PC-9 (cell line): ENCODE measurements at regions of chr2 and their contacts with region 1.

Region 1: DNA sequence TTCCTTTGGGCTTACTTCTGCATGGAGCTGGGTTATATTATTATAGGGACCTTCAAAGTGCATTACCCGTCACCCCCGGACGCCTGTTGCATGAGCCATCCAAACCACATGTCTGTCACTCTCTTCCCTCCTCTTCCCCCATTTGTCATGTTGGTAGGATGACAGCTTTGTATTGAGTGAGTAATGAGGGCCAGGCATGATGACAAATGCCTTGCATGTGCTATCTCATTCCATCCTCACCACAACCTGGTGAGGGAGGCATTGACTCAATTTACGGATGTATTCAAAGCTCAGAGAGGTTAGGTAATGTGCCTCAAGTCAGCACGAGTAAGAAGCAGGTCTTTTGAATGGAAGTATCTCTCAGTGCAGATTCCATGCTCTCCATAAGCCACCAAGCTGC is 510.5 kb upstream of the TNP1 start:
- DNase-seq: peak; percentile 32 to 79
- H3K4me3 ChIP-seq: no peak overlapping the region
- H3K27ac ChIP-seq: no peak overlapping the region
- H3K4me1 ChIP-seq: peaks cover 53% of the 10 kb centered on the region
- H3K27me3 ChIP-seq: no peaks in the 10 kb centered on the region
- CTCF ChIP-seq: no peak

Region 2: DNA sequence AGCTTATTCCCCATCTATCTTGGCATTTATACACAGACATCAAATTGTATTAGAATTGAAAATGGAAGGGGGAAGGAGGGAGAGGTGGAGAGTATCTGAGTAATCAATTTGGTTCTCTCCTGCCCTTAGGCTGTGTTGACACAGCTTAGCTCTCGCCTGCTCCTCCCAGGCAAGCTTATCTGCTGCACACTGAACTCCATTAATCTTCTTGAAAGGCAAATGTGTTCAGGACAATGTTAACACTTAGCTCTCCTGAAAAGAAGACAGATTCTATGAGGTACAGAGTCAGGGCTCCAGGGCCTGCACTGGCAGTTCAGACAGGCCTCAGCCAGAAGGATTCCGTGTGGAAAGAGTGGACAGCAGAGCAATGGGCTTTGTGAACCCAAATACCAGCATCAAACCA is 80.5 kb before region 1 on chr2:
- CTCF ChIA-PET with region 1: no interaction called
- POLR2A ChIA-PET with region 1: no interaction called
- intact Hi-C with region 1: loop called (anchors 2 kb)
- DNase-seq: peak; percentile 45 to 89
- H3K4me3 ChIP-seq: no peak overlapping the region
- H3K27ac ChIP-seq: peak overlapping the region; percentile 25
- H3K4me1 ChIP-seq: peaks cover 40% of the 10 kb centered on the region
- H3K27me3 ChIP-seq: no peaks in the 10 kb centered on the region
- CTCF ChIP-seq: no peak